Motor neuron (in vitro differentiated cells): ENCODE measurements at regions of chr20 and their contacts with region 1.

Region 1: GRCh38 chr20:57089691-57090150 is 176.7 kb downstream of the BMP7 start:
- ATAC-seq: peak; percentile 80 to 95 (median 84)
- H3K4me3 ChIP-seq: no peak overlapping the region
- H3K27ac ChIP-seq: no peak overlapping the region
- H3K4me1 ChIP-seq: peaks cover 7 to 8% of the 10 kb centered on the region in 2 donors

Region 2: DNA sequence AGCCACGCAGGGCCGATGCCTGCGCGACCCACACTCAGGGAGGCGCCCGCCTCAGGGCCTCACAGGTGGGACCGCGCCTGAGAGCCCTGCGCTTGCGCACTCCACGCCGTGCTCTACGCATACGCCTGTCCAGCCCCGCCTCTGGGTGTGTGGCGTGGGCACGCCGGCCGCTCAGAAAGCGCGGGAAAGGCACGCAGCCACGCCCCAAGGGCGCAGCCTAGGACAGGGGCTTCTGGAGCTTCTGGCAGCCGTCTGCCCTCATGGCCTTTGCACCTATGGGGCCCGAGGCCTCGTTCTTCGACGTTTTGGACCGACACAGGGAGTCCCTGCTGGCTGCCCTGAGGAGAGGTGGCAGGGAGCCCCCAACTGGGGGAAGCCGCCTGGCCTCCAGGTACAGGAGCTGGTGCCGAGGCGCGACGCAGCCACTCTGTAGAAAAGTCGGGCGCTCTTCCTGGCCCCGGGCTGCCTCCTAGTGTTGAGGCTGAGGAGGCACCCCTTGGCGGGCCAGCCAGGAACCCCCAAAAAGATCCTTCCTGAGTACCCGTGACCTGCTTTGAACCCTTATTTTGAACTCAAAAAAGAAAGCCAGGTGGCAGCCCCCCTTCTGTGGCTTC is 240.0 kb after region 1 on chr20 and contains the start of gene SPO11:
- in situ Hi-C with region 1: loop called in 4 of 9 experiments (anchors 10 to 25 kb)
- ATAC-seq: peak in 1 of 8 experiments; percentile 12
- H3K4me3 ChIP-seq: no peak within 1 kb of the TSS
- H3K27ac ChIP-seq: no peak within 1 kb of the TSS
- H3K4me1 ChIP-seq: peaks cover 0 to 5% of the 10 kb centered on the region in 2 donors
- total RNA-seq, gene SPO11: not detected

Region 3: DNA sequence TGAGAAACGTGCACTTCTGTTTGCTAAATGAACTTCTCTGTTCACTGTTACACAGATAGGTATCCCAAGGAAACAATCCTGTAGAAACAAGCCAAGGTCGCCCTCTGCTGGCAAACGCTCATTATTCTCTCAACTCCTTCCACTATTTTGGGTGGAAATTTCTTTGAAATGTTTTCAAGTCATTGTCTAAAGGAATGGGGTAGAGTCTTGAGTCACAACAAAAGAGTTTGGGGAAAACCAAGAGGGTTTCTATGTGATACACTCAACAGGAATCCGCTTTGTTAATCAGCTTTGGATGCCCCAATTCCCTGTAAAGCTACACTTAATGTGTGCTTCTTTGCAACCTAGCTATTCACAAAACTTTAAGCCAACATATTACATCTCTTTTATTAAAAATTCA is 256.8 kb after region 1 on chr20:
- in situ Hi-C with region 1: loop called in 7 of 9 experiments (anchors 5 to 25 kb)
- ATAC-seq: peak; percentile 39 to 57 (median 49)
- H3K4me3 ChIP-seq: no peak overlapping the region
- H3K27ac ChIP-seq: no peak overlapping the region
- H3K4me1 ChIP-seq: peaks cover 0 to 9% of the 10 kb centered on the region in 2 donors

Region 4: DNA sequence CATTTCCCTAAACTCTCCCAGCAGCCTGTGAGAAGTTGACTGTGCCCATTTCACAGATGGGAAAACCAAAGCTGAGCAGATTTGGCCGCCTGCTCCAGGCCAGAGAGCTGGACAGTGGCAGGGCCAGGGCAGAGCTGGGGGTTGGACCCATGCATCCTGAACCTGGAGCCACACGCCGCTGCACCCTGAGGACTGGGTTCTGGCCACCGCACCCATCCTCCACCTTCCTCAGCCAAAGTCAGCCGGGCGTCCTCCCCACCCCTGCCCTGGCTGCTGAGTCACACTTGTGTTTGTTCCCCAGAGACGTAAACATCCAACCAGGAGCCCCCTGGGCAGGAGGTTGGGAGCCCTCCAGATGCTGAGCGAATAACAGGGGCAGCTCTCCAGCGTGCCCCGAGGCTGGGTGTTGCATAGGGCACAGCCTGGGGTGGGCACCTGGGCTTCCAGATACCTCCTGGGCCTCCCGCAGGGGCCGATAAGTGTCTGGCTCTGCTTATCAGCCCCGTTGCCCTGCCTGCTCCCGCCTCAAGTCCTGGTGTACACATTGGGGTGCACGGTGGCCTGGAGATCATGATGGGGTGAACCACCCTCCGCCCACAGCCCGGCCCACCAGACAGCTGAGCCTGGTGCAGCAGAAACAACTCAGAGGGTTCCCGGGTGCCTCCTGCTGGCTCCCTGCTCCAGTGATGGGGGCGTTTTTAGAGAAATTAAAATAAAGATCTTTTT is 325.3 kb after region 1 on chr20:
- in situ Hi-C with region 1: no loop called
- ATAC-seq: peak in 2 of 8 experiments; percentile 35 to 64
- H3K4me3 ChIP-seq: no peak overlapping the region
- H3K27ac ChIP-seq: no peak overlapping the region
- H3K4me1 ChIP-seq: peaks cover 0 to 4% of the 10 kb centered on the region in 2 donors